ENCODE measurements at regions of chr20 and their contacts with region 1.

Region 1: DNA sequence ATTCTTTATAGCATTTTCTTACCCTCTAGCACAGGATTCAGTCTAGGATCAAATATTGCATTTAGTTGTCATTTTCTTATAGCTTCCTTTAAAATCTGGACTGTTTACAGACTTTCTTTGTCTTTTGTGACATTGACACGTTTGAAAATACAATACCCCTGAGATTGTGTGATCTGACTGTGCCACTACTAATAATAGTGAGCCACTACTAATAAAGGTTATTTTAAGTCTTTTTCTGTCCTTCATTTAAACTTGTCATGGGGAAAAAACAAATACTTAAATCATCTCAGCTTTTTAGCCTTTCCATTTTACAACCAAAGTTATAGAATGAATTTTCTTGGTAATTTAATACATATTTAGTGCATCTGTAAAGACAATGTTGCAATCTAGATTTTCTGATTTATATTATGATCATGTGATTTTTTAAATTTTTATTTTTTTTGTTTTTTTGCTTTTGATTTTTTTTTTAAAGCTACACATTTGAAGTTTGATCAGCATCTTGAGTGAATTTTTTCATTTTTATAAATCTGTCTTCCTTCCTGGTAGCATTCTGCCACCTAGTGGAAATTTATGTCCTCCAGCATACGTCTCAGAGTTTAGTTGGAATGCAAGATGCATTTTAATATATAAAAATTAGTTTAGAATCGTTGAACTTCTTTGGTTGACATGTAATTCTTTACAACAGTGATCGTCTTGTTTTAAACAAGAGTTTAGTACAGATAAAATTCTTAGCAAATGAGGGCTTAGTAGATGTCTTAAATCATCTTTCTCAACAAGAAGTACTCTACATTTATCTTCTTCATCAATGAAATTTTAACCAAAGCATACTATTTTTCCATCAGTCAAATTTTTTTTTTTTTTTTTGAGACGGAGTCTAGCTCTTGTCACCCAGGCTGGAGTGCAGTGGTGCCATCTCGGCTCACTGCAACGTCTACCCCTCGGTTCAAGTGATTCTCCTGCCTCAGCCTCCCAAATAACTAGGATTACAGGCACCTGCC is 119.4 kb downstream of the NCOA3 start:
- DNase-seq: peak; percentile 29
- H3K4me3 Mint-ChIP-seq: no peak overlapping the region
- H3K27ac Mint-ChIP-seq: no peak overlapping the region
- H3K4me1 Mint-ChIP-seq: peaks cover 35% of the 10 kb centered on the region
- H3K27me3 Mint-ChIP-seq: no peaks in the 10 kb centered on the region

Region 2: GRCh38 chr20:47501483-47502270 is 119.4 kb before region 1 on chr20 and contains the start of gene NCOA3:
- CTCF ChIA-PET with region 1: interaction called, 12 read pairs
- DNase-seq: peak; percentile 93
- H3K4me3 Mint-ChIP-seq: peak within 1 kb of the TSS; percentile 99
- H3K27ac Mint-ChIP-seq: peak within 1 kb of the TSS; percentile 99
- H3K4me1 Mint-ChIP-seq: peaks cover 55% of the 10 kb centered on the region
- H3K27me3 Mint-ChIP-seq: peaks cover 4% of the 10 kb centered on the region

Region 3: DNA sequence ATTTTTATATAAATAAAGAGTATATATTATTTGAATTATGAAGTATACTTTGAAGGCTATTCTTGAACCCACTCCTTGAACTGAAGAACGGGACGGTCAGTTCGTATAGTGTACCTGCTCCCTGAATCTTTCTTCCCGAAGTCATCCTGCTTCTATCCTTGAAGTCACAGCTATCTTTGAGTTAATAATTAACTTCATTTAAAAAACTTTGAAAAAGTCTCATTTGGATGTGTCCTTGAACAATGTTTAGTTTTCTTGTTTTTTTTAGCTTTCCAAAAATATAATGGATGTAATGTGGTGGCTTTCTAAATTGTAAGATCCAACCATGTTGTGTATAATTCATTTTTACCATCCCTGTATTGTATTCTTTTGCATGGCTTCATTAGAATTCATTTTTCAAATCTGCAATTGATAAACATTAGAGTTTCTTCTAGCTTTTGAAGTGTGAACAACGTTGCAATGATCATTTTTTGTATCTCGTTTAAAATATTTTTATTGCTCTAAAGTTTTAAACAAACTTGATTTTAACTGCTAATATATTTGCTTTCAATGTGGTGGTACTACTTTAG is 25.0 kb before region 1 on chr20:
- CTCF ChIA-PET with region 1: no interaction called
- DNase-seq: no peak
- H3K4me3 Mint-ChIP-seq: no peak overlapping the region
- H3K27ac Mint-ChIP-seq: no peak overlapping the region
- H3K4me1 Mint-ChIP-seq: peaks cover 32% of the 10 kb centered on the region
- H3K27me3 Mint-ChIP-seq: no peaks in the 10 kb centered on the region

Region 4: DNA sequence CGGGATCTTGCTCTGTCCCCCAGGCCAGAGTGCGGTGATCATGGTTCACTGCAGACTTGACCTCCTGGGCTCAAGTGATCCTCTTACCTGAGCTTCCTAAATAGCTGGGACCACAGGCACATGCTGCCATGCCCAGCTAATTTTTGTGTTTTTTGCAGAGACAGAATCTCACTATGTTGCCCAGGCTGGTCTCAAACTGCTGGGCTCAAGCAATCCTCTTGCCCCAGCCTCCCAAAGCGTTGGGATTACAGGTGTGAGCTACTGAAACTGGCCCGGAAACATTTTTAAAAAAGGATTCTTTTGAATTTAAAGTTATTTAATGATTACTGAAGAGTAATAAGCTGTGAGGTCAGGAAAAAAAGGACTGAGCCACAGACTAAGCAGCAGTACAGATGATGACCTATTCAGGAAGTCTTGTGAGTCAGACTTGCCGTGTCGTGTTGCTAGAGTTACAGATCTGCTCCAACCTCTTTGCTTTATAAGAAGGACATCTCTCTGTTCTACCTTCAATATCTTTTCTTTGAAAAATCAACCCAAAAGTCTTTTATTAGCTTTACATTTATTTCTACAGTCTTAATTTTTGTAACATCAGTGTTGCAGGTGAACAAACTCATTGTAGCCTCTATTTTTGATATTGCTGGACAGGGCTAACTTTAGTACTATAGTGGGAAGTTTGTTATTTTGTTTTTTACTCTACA is 10.7 kb before region 1 on chr20:
- CTCF ChIA-PET with region 1: interaction called, 10 read pairs
- DNase-seq: peak; percentile 75
- H3K4me3 Mint-ChIP-seq: peak overlapping the region; percentile 40
- H3K27ac Mint-ChIP-seq: peak overlapping the region; percentile 90
- H3K4me1 Mint-ChIP-seq: peaks cover 67% of the 10 kb centered on the region
- H3K27me3 Mint-ChIP-seq: no peaks in the 10 kb centered on the region

Region 5: GRCh38 chr20:47914792-47915191 is 293.7 kb after region 1 on chr20:
- CTCF ChIA-PET with region 1: no interaction called
- DNase-seq: no peak
- H3K4me3 Mint-ChIP-seq: no peak overlapping the region
- H3K27ac Mint-ChIP-seq: no peak overlapping the region
- H3K4me1 Mint-ChIP-seq: no peaks in the 10 kb centered on the region
- H3K27me3 Mint-ChIP-seq: peaks cover 12% of the 10 kb centered on the region

Measured in activated naive CD4-positive, alpha-beta T cell treated with anti-CD3 and anti-CD28 coated beads, Interleukin-2, amount 10 ng/mL, durations not matched to agents 7 days and 5 days (primary cell).